ENCODE measurements at regions of chr13 and their contacts with region 1.

Region 1: GRCh38 chr13:45961468-45961867 is 91.1 kb downstream of the ZC3H13 start:
- DNase-seq: no peak
- ATAC-seq: no peak
- H3K4me3 ChIP-seq: no peak overlapping the region
- H3K4me3 Mint-ChIP-seq: no peak overlapping the region
- H3K27ac ChIP-seq: no peak overlapping the region
- H3K27ac Mint-ChIP-seq: no peak overlapping the region
- H3K4me1 ChIP-seq: no peaks in the 10 kb centered on the region
- H3K4me1 Mint-ChIP-seq: no peaks in the 10 kb centered on the region
- H3K27me3 ChIP-seq: no peaks in the 10 kb centered on the region
- H3K27me3 Mint-ChIP-seq: no peaks in the 10 kb centered on the region
- CTCF ChIP-seq: no peak

Region 2: DNA sequence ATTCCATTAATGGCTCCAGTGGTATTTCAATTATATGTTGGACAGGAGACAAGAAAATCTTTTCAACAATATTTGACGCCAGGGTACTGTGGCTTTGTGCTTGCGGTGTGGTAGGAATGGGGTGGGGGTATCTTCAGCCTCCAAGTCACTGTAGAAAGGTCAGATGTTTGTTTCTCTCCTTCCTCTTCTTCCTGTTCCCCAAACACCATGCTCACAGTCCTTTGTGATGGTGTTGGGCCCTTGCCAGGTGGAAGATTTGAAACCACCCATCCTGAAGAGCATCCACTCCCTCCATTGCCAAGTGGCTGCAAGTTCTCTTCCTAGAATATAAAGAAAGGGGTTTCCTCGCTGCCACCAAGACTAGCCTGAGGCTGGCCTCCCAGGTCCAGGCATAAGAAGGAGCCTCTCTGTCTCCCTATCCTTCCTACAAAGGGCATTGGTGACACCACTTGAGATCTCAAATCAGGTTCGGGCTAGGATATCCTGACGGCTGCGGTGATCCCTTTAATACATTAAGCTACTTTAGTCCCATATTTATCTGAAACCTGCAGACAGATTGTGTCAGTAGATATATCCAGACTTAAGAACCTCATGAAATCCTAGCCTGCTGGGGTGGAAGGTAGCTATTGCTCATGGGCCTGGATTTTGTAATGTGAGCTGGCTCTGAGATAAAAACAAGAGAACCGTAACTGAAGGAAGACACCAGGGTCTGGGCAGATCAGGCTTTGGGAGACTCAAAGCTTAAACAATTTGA is 45.6 kb before region 1 on chr13:
- CTCF ChIA-PET with region 1: no interaction called
- POLR2A ChIA-PET with region 1: no interaction called
- intact Hi-C with region 1: no loop called
- DNase-seq: no peak
- ATAC-seq: no peak
- H3K4me3 ChIP-seq: no peak overlapping the region
- H3K4me3 Mint-ChIP-seq: no peak overlapping the region
- H3K27ac ChIP-seq: no peak overlapping the region
- H3K27ac Mint-ChIP-seq: no peak overlapping the region
- H3K4me1 ChIP-seq: no peaks in the 10 kb centered on the region
- H3K4me1 Mint-ChIP-seq: no peaks in the 10 kb centered on the region
- H3K27me3 ChIP-seq: no peaks in the 10 kb centered on the region
- H3K27me3 Mint-ChIP-seq: no peaks in the 10 kb centered on the region
- CTCF ChIP-seq: no peak

Region 3: GRCh38 chr13:46004491-46004890 is 43.0 kb after region 1 on chr13:
- CTCF ChIA-PET with region 1: no interaction called
- POLR2A ChIA-PET with region 1: no interaction called
- intact Hi-C with region 1: loop called in 1 of 2 experiments (anchors 5 kb)
- DNase-seq: no peak
- ATAC-seq: no peak
- H3K4me3 ChIP-seq: no peak overlapping the region
- H3K4me3 Mint-ChIP-seq: no peak overlapping the region
- H3K27ac ChIP-seq: no peak overlapping the region
- H3K27ac Mint-ChIP-seq: no peak overlapping the region
- H3K4me1 ChIP-seq: no peaks in the 10 kb centered on the region
- H3K4me1 Mint-ChIP-seq: peaks cover 4% of the 10 kb centered on the region
- H3K27me3 ChIP-seq: no peaks in the 10 kb centered on the region
- H3K27me3 Mint-ChIP-seq: no peaks in the 10 kb centered on the region
- CTCF ChIP-seq: no peak

Region 4: DNA sequence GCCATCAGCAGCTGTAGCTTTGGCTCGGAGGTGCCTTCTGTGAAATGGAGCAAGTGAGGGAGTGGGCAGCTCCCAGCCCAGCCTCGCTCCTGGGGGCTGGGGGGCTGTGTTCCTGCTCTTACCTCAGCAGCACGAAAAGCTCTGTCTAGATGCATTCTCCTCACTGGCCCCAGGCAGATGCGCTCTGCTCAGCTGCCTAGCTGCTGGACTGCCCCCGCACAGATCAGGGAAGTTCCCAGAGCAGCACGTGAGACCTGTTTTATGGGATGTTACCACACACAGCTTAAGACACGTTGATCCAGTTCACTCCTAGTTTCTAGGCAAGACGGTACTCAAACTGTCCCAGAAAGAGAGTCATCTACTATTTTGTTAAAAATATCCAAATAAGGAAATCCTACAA is 206.9 kb after region 1 on chr13:
- CTCF ChIA-PET with region 1: no interaction called
- POLR2A ChIA-PET with region 1: no interaction called
- intact Hi-C with region 1: no loop called
- DNase-seq: peak in 4 of 9 experiments; percentile 29 to 86 (median 59)
- ATAC-seq: peak; percentile 15
- H3K4me3 ChIP-seq: peak overlapping the region; percentile 9 to 15
- H3K4me3 Mint-ChIP-seq: peak overlapping the region; percentile 68
- H3K27ac ChIP-seq: peak overlapping the region; percentile 14 to 83
- H3K27ac Mint-ChIP-seq: peak overlapping the region; percentile 89
- H3K4me1 ChIP-seq: peaks cover 93% of the 10 kb centered on the region
- H3K4me1 Mint-ChIP-seq: peaks cover 90% of the 10 kb centered on the region
- H3K27me3 ChIP-seq: no peaks in the 10 kb centered on the region
- H3K27me3 Mint-ChIP-seq: no peaks in the 10 kb centered on the region
- CTCF ChIP-seq: no peak